ENCODE measurements at regions of chr4 and their contacts with region 1.

Region 1: GRCh38 chr4:37977471-37978247 is 17.5 kb downstream of the PTTG2 start:
- DNase-seq: peak; percentile 93
- H3K4me3 Mint-ChIP-seq: peak overlapping the region; percentile 87
- H3K27ac Mint-ChIP-seq: peak overlapping the region; percentile 86
- H3K4me1 Mint-ChIP-seq: peaks cover 24% of the 10 kb centered on the region
- H3K27me3 Mint-ChIP-seq: peaks cover 2% of the 10 kb centered on the region

Region 2: GRCh38 chr4:37603070-37603468 is 374.6 kb before region 1 on chr4:
- intact Hi-C with region 1: loop called (anchors 5 kb)
- DNase-seq: peak; percentile 93
- H3K4me3 Mint-ChIP-seq: peak overlapping the region; percentile 4
- H3K27ac Mint-ChIP-seq: peak overlapping the region; percentile 35
- H3K4me1 Mint-ChIP-seq: peaks cover 20% of the 10 kb centered on the region
- H3K27me3 Mint-ChIP-seq: no peaks in the 10 kb centered on the region

Region 3: DNA sequence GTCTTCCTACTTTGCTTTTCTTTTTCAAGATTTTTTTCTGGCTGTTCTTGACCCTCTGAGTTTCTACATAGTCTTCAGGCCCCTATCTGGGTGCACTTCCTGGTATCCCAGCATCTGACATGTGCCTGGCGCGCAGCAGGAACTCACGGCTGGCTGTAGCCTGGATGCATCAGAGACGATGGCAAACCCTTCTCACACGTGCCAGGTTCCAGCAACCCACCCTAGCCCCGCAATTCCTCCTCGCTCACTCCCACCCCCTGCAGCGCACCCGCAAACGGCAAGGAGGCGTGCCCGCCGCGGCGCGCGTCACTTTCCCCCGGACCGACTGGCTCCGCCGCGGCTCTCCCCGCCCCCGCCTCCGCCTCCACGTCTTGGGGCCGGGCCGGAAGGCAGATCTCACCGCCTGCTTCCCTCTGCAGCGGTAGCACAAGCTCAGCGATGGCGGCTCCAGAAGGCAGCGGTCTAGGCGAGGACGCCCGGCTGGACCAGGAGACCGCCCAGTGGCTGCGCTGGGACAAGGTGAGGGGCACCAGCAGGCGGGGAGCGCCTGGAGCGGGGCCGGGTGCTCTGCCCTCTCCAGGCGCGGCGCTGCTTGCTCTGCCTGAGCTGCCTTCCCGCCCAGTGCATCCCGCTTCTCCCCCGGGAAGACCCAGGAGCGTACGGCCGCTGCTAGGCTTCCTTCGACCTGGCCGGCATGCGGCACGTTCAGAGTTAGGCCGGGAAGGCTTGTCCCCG is 151.2 kb before region 1 on chr4 and contains the start of gene PGM2:
- intact Hi-C with region 1: loop called (anchors 2 kb)
- DNase-seq: peak; percentile 98
- H3K4me3 Mint-ChIP-seq: peak within 1 kb of the TSS; percentile 95
- H3K27ac Mint-ChIP-seq: peak within 1 kb of the TSS; percentile 91
- H3K4me1 Mint-ChIP-seq: peaks cover 32% of the 10 kb centered on the region
- H3K27me3 Mint-ChIP-seq: peaks cover 1% of the 10 kb centered on the region
- total RNA-seq, gene PGM2: 53.4 and 55.1 TPM in 2 replicates

Region 4: DNA sequence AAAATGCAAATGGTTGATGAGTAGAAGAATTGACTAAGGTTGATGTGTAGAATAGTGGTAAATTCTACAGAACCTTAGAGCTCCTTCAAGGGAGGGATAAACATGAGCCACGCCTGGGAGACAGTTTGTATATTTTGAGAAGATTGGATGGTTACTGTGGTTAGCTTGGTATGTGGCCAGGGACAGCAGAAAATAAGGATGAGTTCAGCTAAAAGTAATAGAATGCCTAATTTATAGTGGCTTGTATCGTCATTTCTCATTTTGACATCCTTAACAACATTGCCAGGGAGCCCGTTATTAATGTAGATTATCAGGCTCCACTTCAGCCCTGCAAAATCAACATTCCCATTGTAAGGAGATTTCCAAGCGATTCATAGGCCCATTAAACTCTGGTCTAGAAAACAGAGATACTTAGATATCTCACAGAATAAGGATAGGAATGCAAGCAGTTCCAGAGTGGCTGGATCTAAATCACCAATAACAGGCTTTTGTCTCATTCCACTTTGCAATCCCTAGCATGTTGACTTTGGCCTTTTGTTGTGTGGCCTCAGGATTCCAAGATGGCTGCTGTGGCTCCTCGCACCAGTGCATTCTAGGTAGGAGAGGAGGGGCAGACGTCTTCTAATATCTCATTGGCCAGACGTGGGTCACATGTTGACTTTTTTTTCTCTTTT is 23.9 kb before region 1 on chr4:
- intact Hi-C with region 1: loop called (anchors 2 kb)
- DNase-seq: no peak
- H3K4me3 Mint-ChIP-seq: no peak overlapping the region
- H3K27ac Mint-ChIP-seq: no peak overlapping the region
- H3K4me1 Mint-ChIP-seq: peaks cover 11% of the 10 kb centered on the region
- H3K27me3 Mint-ChIP-seq: no peaks in the 10 kb centered on the region

Region 5: GRCh38 chr4:38154681-38155608 is 177.3 kb after region 1 on chr4:
- intact Hi-C with region 1: no loop called
- DNase-seq: peak; percentile 69
- H3K4me3 Mint-ChIP-seq: peak overlapping the region; percentile 20
- H3K27ac Mint-ChIP-seq: no peak overlapping the region
- H3K4me1 Mint-ChIP-seq: peaks cover 33% of the 10 kb centered on the region
- H3K27me3 Mint-ChIP-seq: peaks cover 10% of the 10 kb centered on the region

Region 6: GRCh38 chr4:38980903-38981676 is 1003.4 kb after region 1 on chr4:
- intact Hi-C with region 1: loop called (anchors 5 kb)
- DNase-seq: peak; percentile 73
- H3K4me3 Mint-ChIP-seq: peak overlapping the region; percentile 69
- H3K27ac Mint-ChIP-seq: peak overlapping the region; percentile 87
- H3K4me1 Mint-ChIP-seq: peaks cover 55% of the 10 kb centered on the region
- H3K27me3 Mint-ChIP-seq: no peaks in the 10 kb centered on the region